ENCODE measurements at regions of chr16 and their contacts with region 1.

Region 1: DNA sequence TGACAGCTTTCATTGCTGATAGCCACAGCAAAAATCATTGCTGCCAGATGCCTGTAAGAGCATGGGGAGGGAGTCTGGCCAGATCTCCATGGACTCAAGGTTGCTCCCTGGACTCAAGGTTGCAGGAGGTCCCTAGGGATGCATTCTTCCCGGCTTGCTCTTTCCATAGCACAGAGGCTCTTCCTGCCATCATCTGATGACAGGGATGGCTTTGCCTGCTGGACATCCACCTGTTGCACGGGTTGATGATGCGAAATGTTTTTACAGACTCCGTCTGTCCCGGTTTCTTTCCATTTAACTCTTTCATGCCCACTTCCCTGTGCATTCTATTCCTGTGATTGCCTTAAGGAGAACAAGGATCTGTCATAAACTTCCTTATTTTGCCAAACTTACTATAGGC is 115.6 kb upstream of the HSBP1 start:
- DNase-seq: no peak
- H3K4me3 ChIP-seq: no peak overlapping the region
- H3K4me3 Mint-ChIP-seq: no peak overlapping the region
- H3K27ac ChIP-seq: no peak overlapping the region
- H3K27ac Mint-ChIP-seq: peak overlapping the region in 1 of 7 donors; percentile 25
- H3K4me1 ChIP-seq: peaks cover 6 to 26% of the 10 kb centered on the region in 2 donors
- H3K4me1 Mint-ChIP-seq: peaks cover 25% of the 10 kb centered on the region
- H3K27me3 ChIP-seq: peaks cover 0 to 2% of the 10 kb centered on the region in 2 donors
- H3K27me3 Mint-ChIP-seq: peaks cover 12 to 15% (median 14%) of the 10 kb centered on the region in 3 donors
- CTCF ChIP-seq: no peak

Region 2: DNA sequence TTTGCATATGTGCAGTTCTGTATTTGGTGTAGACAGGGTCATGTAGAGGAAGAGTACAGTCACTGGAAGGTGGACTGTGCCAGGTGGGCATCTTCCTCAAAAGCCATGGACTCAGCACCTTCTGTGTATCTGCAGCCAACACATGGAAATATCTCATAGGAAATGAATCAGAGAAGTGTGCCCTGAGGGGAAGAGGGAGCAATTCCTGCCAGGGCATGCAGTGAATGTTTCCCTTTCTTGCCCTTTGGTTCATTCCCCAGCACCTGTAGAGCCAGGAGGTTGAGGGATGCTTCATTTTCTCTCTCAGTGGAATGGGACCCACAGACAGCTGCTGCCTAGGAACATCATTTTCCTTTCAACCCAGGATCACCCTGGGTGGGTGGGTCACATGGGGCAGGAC is 30.6 kb before region 1 on chr16:
- intact Hi-C with region 1: no loop called
- DNase-seq: no peak
- H3K4me3 ChIP-seq: no peak overlapping the region
- H3K4me3 Mint-ChIP-seq: no peak overlapping the region
- H3K27ac ChIP-seq: no peak overlapping the region
- H3K27ac Mint-ChIP-seq: no peak overlapping the region
- H3K4me1 ChIP-seq: no peaks in the 10 kb centered on the region
- H3K4me1 Mint-ChIP-seq: no peaks in the 10 kb centered on the region
- H3K27me3 ChIP-seq: no peaks in the 10 kb centered on the region
- H3K27me3 Mint-ChIP-seq: peaks cover 0 to 4% (median 3%) of the 10 kb centered on the region in 3 donors
- CTCF ChIP-seq: no peak

Region 3: GRCh38 chr16:83813823-83814658 is 121.8 kb after region 1 on chr16:
- intact Hi-C with region 1: loop called in 1 of 2 experiments (anchors 10 kb)
- DNase-seq: peak in 2 of 3 donors; percentile 22 to 41
- H3K4me3 ChIP-seq: no peak overlapping the region
- H3K4me3 Mint-ChIP-seq: no peak overlapping the region
- H3K27ac ChIP-seq: peak overlapping the region in 1 of 2 donors; percentile 42
- H3K27ac Mint-ChIP-seq: peak overlapping the region in 6 of 7 donors; percentile 18 to 84 (median 66)
- H3K4me1 ChIP-seq: peaks cover 2 to 26% of the 10 kb centered on the region in 2 donors
- H3K4me1 Mint-ChIP-seq: peaks cover 33% of the 10 kb centered on the region
- H3K27me3 ChIP-seq: no peaks in the 10 kb centered on the region
- H3K27me3 Mint-ChIP-seq: peaks cover 0 to 2% (median 2%) of the 10 kb centered on the region in 3 donors
- CTCF ChIP-seq: no peak

Region 4: GRCh38 chr16:84239141-84239769 is 547.0 kb after region 1 on chr16:
- intact Hi-C with region 1: no loop called
- DNase-seq: peak; percentile 26 to 64 (median 40)
- H3K4me3 ChIP-seq: peak overlapping the region in 1 of 3 experiments; percentile 51
- H3K4me3 Mint-ChIP-seq: peak overlapping the region; percentile 62 to 87
- H3K27ac ChIP-seq: no peak overlapping the region
- H3K27ac Mint-ChIP-seq: peak overlapping the region in 5 of 7 donors; percentile 23 to 65 (median 51)
- H3K4me1 ChIP-seq: peaks cover 11 to 13% of the 10 kb centered on the region in 2 donors
- H3K4me1 Mint-ChIP-seq: peaks cover 15% of the 10 kb centered on the region
- H3K27me3 ChIP-seq: no peaks in the 10 kb centered on the region
- H3K27me3 Mint-ChIP-seq: peaks cover 11 to 25% (median 17%) of the 10 kb centered on the region in 3 donors
- CTCF ChIP-seq: no peak